ENCODE measurements at regions of chr19 and their contacts with region 1.

Region 1: GRCh38 chr19:51158474-51159129 is 16.5 kb downstream of the SIGLEC7 start:
- H3K4me3 ChIP-seq: no peak overlapping the region
- H3K27ac ChIP-seq: no peak overlapping the region
- H3K4me1 ChIP-seq: no peaks in the 10 kb centered on the region
- CTCF ChIP-seq: peak; percentile 44

Region 2: DNA sequence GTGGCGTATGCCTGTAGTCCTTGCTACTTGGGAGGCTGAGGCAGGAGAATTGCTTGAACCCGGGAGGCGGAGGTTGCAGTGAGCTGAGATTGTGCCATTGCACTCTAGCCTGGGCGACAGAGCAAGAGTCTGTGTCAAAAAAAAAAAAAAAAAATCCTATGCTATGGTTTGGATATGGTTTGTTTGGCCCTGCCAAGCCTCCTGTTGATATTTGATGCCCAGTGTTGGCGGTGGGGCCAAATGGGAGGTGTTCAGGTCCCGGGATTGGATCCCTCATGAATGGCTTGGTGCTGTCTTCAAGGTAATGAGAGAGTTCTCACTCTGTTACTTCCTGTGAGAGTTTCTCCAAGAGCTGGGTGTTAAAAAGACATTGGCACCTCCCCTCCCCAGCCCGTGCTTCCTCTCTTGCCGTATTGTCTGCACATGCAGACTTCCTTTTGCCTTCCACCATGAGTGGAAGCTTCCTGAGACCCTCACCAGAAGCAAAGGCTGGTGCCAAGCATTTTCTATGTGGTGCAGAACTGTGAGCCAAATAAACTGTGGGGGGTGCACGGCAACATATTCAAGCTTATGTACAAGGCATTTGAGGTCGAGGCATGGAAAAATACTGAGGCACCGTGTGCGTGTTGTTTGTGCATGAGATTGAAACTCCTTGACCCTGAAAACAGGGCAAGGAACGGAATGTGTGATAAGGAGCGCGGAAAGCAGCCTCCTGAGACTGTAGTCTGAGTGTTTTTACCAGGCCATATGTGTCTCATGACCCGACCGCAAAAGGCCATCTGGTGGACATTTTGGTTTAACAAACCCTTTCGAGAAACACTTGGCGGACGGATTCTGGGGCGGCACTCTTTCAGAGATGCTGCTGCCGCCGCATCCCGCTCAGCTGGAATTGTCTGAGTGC is 26.6 kb before region 1 on chr19:
- CTCF ChIA-PET with region 1: interaction called, 13 read pairs
- POLR2A ChIA-PET with region 1: no interaction called
- H3K4me3 ChIP-seq: no peak overlapping the region
- H3K27ac ChIP-seq: no peak overlapping the region; the same call in 1 of the 2 replicates
- H3K4me1 ChIP-seq: peaks cover 12% of the 10 kb centered on the region
- CTCF ChIP-seq: no peak

Region 3: GRCh38 chr19:51168564-51169282 is 10.1 kb after region 1 on chr19:
- CTCF ChIA-PET with region 1: interaction called, 44 read pairs
- POLR2A ChIA-PET with region 1: no interaction called
- H3K4me3 ChIP-seq: no peak overlapping the region
- H3K27ac ChIP-seq: no peak overlapping the region
- H3K4me1 ChIP-seq: no peaks in the 10 kb centered on the region; the same call in 1 of the 2 replicates
- CTCF ChIP-seq: no peak

Region 4: DNA sequence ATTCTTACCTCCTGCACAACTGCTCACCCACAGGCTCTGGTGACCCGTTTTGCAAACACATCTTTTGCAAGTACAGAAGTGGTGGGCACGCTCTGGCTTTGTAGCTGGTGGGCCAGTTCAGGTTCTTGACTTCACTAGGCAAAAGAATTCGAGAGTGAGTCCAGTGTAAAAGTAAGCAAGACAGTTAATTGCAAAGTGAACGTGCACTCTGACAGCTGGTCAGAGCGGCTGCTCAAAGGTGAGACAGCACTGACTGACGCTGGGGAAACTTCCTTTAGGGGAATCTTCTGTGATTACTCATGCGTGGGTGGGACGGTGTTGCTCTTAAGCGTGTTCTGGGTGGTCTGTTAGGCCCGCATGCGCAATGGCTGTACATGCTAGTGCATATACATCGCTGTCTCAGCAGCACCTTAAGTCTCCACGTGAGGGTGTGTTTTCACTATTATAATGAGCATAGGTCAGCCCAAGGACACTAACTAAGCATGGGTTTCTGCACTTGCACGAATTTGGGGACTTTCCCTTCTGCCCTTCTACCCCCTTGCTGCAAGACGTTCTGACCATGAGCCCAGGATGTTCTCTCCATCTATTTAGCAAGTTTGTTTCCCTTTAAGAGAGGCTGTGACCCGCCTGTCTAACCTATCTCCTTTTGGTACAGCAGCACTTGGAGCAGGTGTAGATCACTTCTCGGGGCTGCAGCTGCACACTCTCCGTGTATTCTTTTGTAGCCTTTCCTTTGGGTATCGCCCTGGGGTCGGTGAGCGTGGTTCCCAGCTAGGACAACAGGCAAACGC is 36.1 kb after region 1 on chr19:
- CTCF ChIA-PET with region 1: interaction called, 11 read pairs
- POLR2A ChIA-PET with region 1: no interaction called
- H3K4me3 ChIP-seq: no peak overlapping the region
- H3K27ac ChIP-seq: no peak overlapping the region
- H3K4me1 ChIP-seq: no peaks in the 10 kb centered on the region
- CTCF ChIP-seq: no peak

Region 5: DNA sequence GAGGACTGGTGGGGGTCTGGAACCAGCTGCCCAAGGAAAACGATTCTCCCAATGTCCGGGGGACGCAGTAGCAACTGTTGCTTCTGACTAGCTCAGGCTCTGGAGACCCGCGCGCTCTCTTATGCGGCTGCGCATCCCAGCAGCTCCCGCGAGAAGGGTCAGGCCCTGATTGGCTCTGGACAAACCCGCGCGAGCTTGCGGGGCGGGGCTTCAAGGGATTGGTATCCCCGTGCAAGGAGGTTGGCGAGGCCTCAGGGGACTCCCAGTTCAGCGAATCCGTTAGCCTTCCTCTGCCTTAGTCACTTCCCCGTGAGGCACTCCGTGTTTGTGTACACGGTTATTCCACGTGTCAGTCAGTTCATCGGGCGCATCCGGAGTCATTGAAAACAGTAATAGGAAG is 112.5 kb after region 1 on chr19:
- CTCF ChIA-PET with region 1: interaction called, 10 read pairs
- POLR2A ChIA-PET with region 1: no interaction called
- H3K4me3 ChIP-seq: no peak overlapping the region
- H3K27ac ChIP-seq: no peak overlapping the region
- H3K4me1 ChIP-seq: no peaks in the 10 kb centered on the region
- CTCF ChIP-seq: no peak

Measured in HEK293 (cell line).